ENCODE measurements at regions of chr5 and their contacts with region 1.

Region 1: GRCh38 chr5:94901191-94901979 is 282.9 kb downstream of the SLF1 start:
- DNase-seq: no peak
- ATAC-seq: no peak
- H3K4me3 ChIP-seq: no peak overlapping the region
- H3K27ac ChIP-seq: no peak overlapping the region
- H3K4me1 ChIP-seq: no peaks in the 10 kb centered on the region
- H3K27me3 ChIP-seq: no peaks in the 10 kb centered on the region
- CTCF ChIP-seq: no peak

Region 2: GRCh38 chr5:94072116-94072515 is 829.3 kb before region 1 on chr5:
- CTCF ChIA-PET with region 1: no interaction called
- POLR2A ChIA-PET with region 1: interaction called, 12 read pairs
- in situ Hi-C with region 1: no loop called
- intact Hi-C with region 1: no loop called
- DNase-seq: no peak
- ATAC-seq: no peak
- H3K4me3 ChIP-seq: no peak overlapping the region
- H3K27ac ChIP-seq: no peak overlapping the region
- H3K4me1 ChIP-seq: no peaks in the 10 kb centered on the region
- H3K27me3 ChIP-seq: no peaks in the 10 kb centered on the region
- CTCF ChIP-seq: no peak

Region 3: DNA sequence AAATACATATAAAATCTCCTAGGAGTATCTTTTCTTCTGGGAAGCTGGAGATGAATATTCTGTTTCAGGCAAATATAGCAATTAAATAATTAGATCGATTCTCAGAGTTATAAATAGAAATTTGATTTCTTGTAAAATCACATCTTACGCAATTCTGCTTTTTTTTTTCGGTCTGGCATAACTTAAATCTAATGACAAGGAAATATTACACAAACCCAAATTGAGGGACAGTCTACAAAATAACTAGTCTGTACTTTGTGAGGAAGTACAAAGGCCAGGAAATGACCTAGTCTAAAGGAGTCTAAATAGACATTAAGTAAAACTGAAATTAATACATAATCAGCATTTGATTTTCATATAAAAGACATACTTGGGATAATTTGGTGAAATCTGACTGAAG is 416.3 kb before region 1 on chr5:
- CTCF ChIA-PET with region 1: no interaction called
- POLR2A ChIA-PET with region 1: no interaction called
- in situ Hi-C with region 1: no loop called
- intact Hi-C with region 1: no loop called
- DNase-seq: no peak
- ATAC-seq: no peak
- H3K4me3 ChIP-seq: no peak overlapping the region
- H3K27ac ChIP-seq: no peak overlapping the region
- H3K4me1 ChIP-seq: no peaks in the 10 kb centered on the region
- H3K27me3 ChIP-seq: no peaks in the 10 kb centered on the region; the same call in 1 of the 2 replicates
- CTCF ChIP-seq: no peak